ENCODE measurements at regions of chr2 and their contacts with region 1.

Region 1: DNA sequence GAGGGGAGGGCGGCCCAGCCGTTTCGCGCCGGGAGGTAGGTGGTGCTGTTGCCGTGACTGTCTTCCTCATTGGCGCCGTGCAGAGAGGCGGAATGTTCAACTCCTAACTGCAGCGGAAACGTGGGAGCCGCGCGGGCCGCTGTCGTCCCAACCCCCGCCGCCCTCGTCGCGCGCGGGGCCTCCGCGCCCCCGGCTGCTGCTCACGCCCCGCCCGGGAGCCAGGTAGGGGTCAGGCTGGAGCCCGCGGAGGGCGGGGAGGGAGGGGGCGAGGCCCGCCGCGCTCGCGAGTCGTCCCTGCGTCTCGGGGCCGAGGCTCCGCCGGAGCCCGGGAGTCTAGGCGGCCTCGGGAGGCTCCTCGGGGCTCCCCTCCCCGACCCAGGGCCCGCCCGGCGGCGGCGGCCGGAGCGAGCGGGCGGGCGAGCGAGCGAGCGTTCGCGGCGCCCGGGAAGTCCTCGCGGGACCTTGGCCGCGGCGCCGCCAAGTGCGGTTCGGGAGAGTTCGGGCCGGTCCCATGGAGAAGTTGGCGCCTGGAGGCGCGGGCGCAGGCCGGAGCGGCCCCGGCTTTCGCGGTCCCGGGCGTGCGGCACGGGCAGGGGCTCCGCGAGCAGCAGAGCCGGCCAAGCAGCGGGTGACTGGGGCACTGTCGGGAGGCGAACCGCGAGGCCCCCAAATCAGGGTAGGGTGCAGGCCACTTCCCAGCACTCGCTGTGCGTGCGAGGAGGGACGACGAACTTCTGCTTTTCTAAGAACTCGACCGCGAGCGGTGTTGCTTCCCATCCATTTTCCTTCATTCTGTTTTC is at the start of gene MAP3K20:
- DNase-seq: peak; percentile 70
- H3K4me3 ChIP-seq: peak within 1 kb of the TSS; percentile 54 to 86 (median 56)
- H3K27ac ChIP-seq: peak within 1 kb of the TSS; percentile 78
- H3K4me1 ChIP-seq: peaks cover 15% of the 10 kb centered on the region
- H3K27me3 ChIP-seq: no peaks in the 10 kb centered on the region
- CTCF ChIP-seq: peak; percentile 17 to 48
- POLR2A ChIP-seq: peak; percentile 54
- total RNA-seq, gene MAP3K20: 31.5 and 32.0 TPM in 2 replicates

Region 2: GRCh38 chr2:172977270-172978062 is 98.5 kb before region 1 on chr2:
- CTCF ChIA-PET with region 1: no interaction called
- POLR2A ChIA-PET with region 1: no interaction called
- dilution Hi-C with region 1: no loop called
- intact Hi-C with region 1: no loop called
- DNase-seq: no peak
- H3K4me3 ChIP-seq: no peak overlapping the region
- H3K27ac ChIP-seq: no peak overlapping the region
- H3K4me1 ChIP-seq: no peaks in the 10 kb centered on the region
- H3K27me3 ChIP-seq: no peaks in the 10 kb centered on the region
- CTCF ChIP-seq: no peak
- POLR2A ChIP-seq: no peak

Region 3: GRCh38 chr2:173048897-173049661 is 26.9 kb before region 1 on chr2:
- CTCF ChIA-PET with region 1: interaction called, 3 read pairs
- POLR2A ChIA-PET with region 1: no interaction called
- dilution Hi-C with region 1: no loop called
- intact Hi-C with region 1: loop called (anchors 1 kb)
- DNase-seq: peak; percentile 91
- H3K4me3 ChIP-seq: peak overlapping the region in 1 of 3 experiments; percentile 1
- H3K27ac ChIP-seq: peak overlapping the region; percentile 70
- H3K4me1 ChIP-seq: peaks cover 18% of the 10 kb centered on the region
- H3K27me3 ChIP-seq: no peaks in the 10 kb centered on the region
- CTCF ChIP-seq: no peak
- POLR2A ChIP-seq: no peak

Region 4: DNA sequence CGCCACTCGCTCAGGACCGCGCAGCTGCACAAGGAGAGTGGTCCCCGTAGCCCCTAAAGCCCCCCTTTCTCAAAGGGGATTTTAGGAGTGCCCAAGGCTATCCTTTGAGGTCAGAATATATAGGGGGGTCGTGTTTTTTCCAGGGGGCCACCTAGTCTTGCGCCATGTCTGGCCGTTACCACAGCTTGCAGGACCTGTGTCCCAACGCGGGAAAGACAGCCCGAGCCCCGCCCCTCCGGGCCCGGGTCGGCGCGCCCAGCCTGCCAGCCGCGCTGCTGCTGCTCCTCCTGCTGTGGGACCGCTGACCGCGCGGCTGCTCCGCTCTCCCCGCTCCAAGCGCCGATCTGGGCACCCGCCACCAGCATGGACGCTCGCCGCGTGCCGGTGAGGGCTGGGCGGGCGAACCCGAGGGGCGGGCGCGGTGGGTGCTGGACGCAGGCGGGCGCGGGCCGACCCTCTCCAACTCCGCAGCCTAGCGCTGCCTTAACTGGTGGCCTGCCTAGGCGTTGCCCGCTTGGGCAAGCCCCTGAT is 278.7 kb after region 1 on chr2 and contains the start of gene CDCA7:
- CTCF ChIA-PET with region 1: no interaction called
- POLR2A ChIA-PET with region 1: no interaction called
- dilution Hi-C with region 1: no loop called
- intact Hi-C with region 1: loop called (anchors 2 kb)
- DNase-seq: peak; percentile 80
- H3K4me3 ChIP-seq: peak within 1 kb of the TSS; percentile 52 to 90 (median 80)
- H3K27ac ChIP-seq: peak within 1 kb of the TSS; percentile 92
- H3K4me1 ChIP-seq: peaks cover 8% of the 10 kb centered on the region
- H3K27me3 ChIP-seq: peaks cover 0 to 3% of the 10 kb centered on the region in 2 experiments
- CTCF ChIP-seq: peak in 1 of 2 donors; percentile 5
- POLR2A ChIP-seq: no peak
- total RNA-seq, gene CDCA7: 27.7 and 29.7 TPM in 2 replicates

Measured in endothelial cell of umbilical vein (primary cell).